ENCODE measurements at regions of chr6 and their contacts with region 1.

Region 1: DNA sequence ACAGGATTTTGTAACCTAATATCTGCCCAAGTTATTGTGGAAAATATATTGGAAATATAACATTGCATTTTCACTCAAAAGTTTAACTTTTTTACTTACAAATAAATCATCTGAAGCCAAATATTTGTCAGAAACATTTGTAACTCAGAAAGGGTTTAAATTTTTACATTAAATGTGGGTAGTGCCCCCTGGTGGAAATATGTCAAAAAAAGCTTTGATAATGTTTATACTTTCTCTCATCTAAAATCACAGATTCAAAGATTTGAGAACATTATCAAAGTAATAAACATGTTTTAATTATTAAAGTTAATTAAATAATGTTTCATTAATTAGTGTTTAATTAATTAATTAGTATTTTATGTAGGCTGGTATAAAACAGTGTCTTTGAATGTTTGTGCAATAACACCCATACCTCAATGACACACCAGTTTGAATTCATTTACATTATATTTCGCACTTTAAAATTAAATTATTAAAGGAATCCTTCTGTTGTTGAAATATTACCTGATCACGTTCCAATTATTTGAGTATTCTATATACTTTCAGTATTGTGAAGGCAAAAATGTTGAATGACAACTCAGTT is 320.1 kb upstream of the FKBP1C start:
- DNase-seq: peak; percentile 2
- ATAC-seq: no peak
- H3K4me3 ChIP-seq: no peak overlapping the region
- H3K4me3 Mint-ChIP-seq: no peak overlapping the region
- H3K27ac ChIP-seq: no peak overlapping the region
- H3K27ac Mint-ChIP-seq: no peak overlapping the region
- H3K4me1 ChIP-seq: no peaks in the 10 kb centered on the region
- H3K4me1 Mint-ChIP-seq: no peaks in the 10 kb centered on the region
- H3K27me3 ChIP-seq: no peaks in the 10 kb centered on the region
- H3K27me3 Mint-ChIP-seq: no peaks in the 10 kb centered on the region
- CTCF ChIP-seq: peak; percentile 57

Region 2: GRCh38 chr6:61809004-61809595 is 1082.1 kb before region 1 on chr6:
- CTCF ChIA-PET with region 1: no interaction called
- POLR2A ChIA-PET with region 1: no interaction called
- intact Hi-C with region 1: loop called (anchors 5 kb)
- DNase-seq: peak; percentile 60
- ATAC-seq: peak; percentile 33
- H3K4me3 ChIP-seq: no peak overlapping the region
- H3K4me3 Mint-ChIP-seq: no peak overlapping the region
- H3K27ac ChIP-seq: no peak overlapping the region
- H3K27ac Mint-ChIP-seq: no peak overlapping the region
- H3K4me1 ChIP-seq: no peaks in the 10 kb centered on the region
- H3K4me1 Mint-ChIP-seq: no peaks in the 10 kb centered on the region
- H3K27me3 ChIP-seq: no peaks in the 10 kb centered on the region
- H3K27me3 Mint-ChIP-seq: no peaks in the 10 kb centered on the region
- CTCF ChIP-seq: peak; percentile 72

Measured in B cell (primary cell).